Activated CD8-positive, alpha-beta T cell treated with anti-CD3 and anti-CD28 coated beads for 36 hours (primary cell): ENCODE measurements at regions of chr3 and their contacts with region 1.

Region 1: GRCh38 chr3:58630076-58630709 is 36.4 kb downstream of the FAM3D start:
- DNase-seq: peak; percentile 66
- ATAC-seq: peak; percentile 51
- H3K4me3 Mint-ChIP-seq: no peak overlapping the region
- H3K27ac Mint-ChIP-seq: no peak overlapping the region
- H3K4me1 Mint-ChIP-seq: no peaks in the 10 kb centered on the region
- H3K27me3 Mint-ChIP-seq: peaks cover 4% of the 10 kb centered on the region
- CTCF ChIP-seq: peak; percentile 93

Region 2: DNA sequence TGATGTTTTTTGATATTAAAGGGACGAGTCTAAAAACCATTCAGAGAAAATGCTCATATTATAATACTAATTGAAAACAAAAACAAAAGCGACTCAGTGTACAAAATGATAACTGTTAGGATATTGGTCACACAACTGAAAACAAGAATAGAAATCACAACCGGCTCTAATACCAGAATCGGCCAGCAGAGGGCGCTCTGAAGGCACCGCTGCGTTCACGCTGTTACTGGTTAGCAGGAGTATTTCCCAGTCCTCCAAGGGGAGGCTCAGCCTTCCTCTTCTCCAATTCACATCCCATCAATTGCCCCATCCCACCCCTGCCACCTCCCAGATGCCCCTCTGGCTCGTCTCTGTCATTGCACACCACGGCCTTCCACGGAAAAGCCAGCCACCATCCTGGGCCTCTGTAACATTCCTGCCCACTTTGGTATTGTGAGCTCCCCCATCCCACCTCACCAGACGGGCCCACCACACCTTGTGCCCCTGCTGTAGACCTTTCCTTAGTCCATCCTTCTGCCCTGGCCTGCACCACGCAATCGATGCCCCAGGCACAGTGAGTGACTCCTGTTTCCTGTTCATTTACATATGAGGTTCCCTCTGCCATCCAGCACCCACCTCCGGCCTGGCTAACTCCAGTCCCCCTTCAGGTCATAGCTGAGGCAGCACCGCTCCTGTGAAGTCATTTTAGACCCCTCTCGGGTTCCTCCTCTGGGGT is 61.5 kb before region 1 on chr3:
- CTCF ChIA-PET with region 1: interaction called, 161 read pairs
- POLR2A ChIA-PET with region 1: interaction called, 3 read pairs
- intact Hi-C with region 1: loop called (anchors 2 kb)
- DNase-seq: peak; percentile 83
- ATAC-seq: peak; percentile 61
- H3K4me3 Mint-ChIP-seq: no peak overlapping the region
- H3K27ac Mint-ChIP-seq: no peak overlapping the region
- H3K4me1 Mint-ChIP-seq: peaks cover 4% of the 10 kb centered on the region
- H3K27me3 Mint-ChIP-seq: peaks cover 1% of the 10 kb centered on the region
- CTCF ChIP-seq: peak; percentile 94

Region 3: DNA sequence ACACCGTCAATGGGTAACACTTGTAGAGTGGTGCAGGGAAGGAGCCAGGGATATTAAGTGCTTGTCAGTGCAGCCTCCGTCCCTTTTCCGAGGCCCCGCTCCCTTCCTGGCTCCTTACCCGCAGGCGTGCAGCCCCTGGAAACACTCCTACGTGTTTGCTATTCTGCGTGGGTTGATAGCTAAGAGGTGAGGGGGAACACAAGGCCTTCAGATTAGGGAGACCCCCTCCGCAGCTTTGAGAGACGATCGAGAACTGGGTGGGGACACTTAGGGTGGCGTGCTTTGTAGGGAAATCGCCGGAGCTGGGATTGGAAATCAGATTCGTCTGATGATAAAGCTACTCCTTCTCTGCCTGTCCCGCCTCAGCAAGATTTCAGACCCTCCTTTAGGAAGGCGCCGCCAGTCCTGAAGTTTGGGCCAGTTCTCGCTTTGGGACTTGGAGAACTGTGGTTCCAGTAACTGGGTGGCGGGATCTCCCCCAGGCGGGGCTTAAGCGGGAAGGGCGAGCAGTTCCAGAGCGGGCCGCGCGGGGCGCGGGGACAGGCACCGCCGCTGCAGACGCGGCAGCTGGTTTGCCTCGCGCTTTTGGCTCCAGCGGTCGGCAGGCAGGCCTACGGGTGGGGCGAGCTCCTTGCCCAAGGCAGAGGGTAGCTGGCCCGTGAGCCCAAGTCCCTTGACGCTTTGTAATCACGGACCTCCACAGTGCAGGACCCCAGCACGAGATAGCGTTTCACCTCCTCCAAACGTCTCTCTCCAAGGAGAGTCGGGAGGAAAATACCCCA is 45.0 kb before region 1 on chr3:
- CTCF ChIA-PET with region 1: interaction called, 10 read pairs
- POLR2A ChIA-PET with region 1: no interaction called
- intact Hi-C with region 1: no loop called
- DNase-seq: peak; percentile 63
- ATAC-seq: peak; percentile 85
- H3K4me3 Mint-ChIP-seq: peak overlapping the region; percentile 73
- H3K27ac Mint-ChIP-seq: no peak overlapping the region
- H3K4me1 Mint-ChIP-seq: peaks cover 13% of the 10 kb centered on the region
- H3K27me3 Mint-ChIP-seq: peaks cover 39% of the 10 kb centered on the region
- CTCF ChIP-seq: peak; percentile 56

Region 4: GRCh38 chr3:58608648-58609047 is 21.5 kb before region 1 on chr3:
- CTCF ChIA-PET with region 1: interaction called, 10 read pairs
- POLR2A ChIA-PET with region 1: no interaction called
- intact Hi-C with region 1: no loop called
- DNase-seq: no peak
- ATAC-seq: no peak
- H3K4me3 Mint-ChIP-seq: no peak overlapping the region
- H3K27ac Mint-ChIP-seq: no peak overlapping the region
- H3K4me1 Mint-ChIP-seq: no peaks in the 10 kb centered on the region
- H3K27me3 Mint-ChIP-seq: peaks cover 6% of the 10 kb centered on the region
- CTCF ChIP-seq: no peak

Region 5: GRCh38 chr3:58617338-58617761 is 12.8 kb before region 1 on chr3:
- CTCF ChIA-PET with region 1: interaction called, 20 read pairs
- POLR2A ChIA-PET with region 1: no interaction called
- intact Hi-C with region 1: no loop called
- DNase-seq: no peak
- ATAC-seq: no peak
- H3K4me3 Mint-ChIP-seq: no peak overlapping the region
- H3K27ac Mint-ChIP-seq: no peak overlapping the region
- H3K4me1 Mint-ChIP-seq: no peaks in the 10 kb centered on the region
- H3K27me3 Mint-ChIP-seq: no peaks in the 10 kb centered on the region
- CTCF ChIP-seq: no peak

Region 6: DNA sequence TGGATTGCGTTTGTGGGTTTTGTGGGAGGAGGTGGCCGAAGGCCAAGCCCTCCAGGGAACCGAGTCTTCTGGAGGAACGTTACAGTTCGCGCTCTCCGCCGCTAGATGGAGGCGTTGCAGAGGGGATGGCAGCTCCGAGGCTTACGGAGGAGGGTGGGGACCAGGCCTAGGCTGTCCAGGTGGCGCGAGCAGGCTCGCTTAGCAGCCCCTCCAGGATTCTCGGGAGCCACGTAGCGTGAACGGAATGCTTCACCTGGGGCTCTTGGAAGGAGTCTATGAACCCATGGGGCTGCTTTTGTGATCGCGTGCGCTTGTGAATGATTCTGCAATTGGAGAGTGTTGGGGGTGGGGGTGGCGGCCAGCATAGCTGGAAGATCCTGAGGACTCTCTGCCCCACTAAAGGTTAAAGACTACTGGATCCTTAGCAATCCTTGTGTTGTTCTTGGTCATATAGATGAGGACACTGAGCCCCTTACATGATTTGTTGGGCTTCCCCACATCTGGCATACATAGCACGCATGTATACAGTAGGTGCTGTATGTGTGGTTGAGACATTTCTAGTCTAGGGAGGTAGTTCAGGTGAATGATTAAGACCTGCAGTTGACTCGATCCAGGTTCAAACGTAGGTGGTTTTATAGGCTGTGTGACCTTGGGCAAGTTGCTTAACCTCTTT is 10.6 kb after region 1 on chr3:
- CTCF ChIA-PET with region 1: interaction called, 32 read pairs
- POLR2A ChIA-PET with region 1: no interaction called
- intact Hi-C with region 1: no loop called
- DNase-seq: peak; percentile 71
- ATAC-seq: peak; percentile 98
- H3K4me3 Mint-ChIP-seq: no peak overlapping the region
- H3K27ac Mint-ChIP-seq: no peak overlapping the region
- H3K4me1 Mint-ChIP-seq: no peaks in the 10 kb centered on the region
- H3K27me3 Mint-ChIP-seq: no peaks in the 10 kb centered on the region
- CTCF ChIP-seq: peak; percentile 91

Region 7: GRCh38 chr3:58848826-58849225 is 218.6 kb after region 1 on chr3:
- CTCF ChIA-PET with region 1: no interaction called
- POLR2A ChIA-PET with region 1: no interaction called
- intact Hi-C with region 1: no loop called
- DNase-seq: no peak
- ATAC-seq: no peak
- H3K4me3 Mint-ChIP-seq: no peak overlapping the region
- H3K27ac Mint-ChIP-seq: no peak overlapping the region
- H3K4me1 Mint-ChIP-seq: no peaks in the 10 kb centered on the region
- H3K27me3 Mint-ChIP-seq: no peaks in the 10 kb centered on the region
- CTCF ChIP-seq: no peak